ENCODE measurements at regions of chr15 and their contacts with region 1.

Region 1: GRCh38 chr15:37880009-37880834 is 54.2 kb upstream of the TMCO5A start:
- DNase-seq: no peak
- H3K4me3 ChIP-seq: no peak overlapping the region
- H3K27me3 ChIP-seq: no peaks in the 10 kb centered on the region
- CTCF ChIP-seq: peak; percentile 80

Region 2: GRCh38 chr15:37134699-37135131 is 745.5 kb before region 1 on chr15:
- CTCF ChIA-PET with region 1: interaction called, 15 read pairs
- POLR2A ChIA-PET with region 1: no interaction called
- DNase-seq: no peak
- H3K4me3 ChIP-seq: no peak overlapping the region
- H3K27me3 ChIP-seq: no peaks in the 10 kb centered on the region
- CTCF ChIP-seq: peak; percentile 72

Region 3: DNA sequence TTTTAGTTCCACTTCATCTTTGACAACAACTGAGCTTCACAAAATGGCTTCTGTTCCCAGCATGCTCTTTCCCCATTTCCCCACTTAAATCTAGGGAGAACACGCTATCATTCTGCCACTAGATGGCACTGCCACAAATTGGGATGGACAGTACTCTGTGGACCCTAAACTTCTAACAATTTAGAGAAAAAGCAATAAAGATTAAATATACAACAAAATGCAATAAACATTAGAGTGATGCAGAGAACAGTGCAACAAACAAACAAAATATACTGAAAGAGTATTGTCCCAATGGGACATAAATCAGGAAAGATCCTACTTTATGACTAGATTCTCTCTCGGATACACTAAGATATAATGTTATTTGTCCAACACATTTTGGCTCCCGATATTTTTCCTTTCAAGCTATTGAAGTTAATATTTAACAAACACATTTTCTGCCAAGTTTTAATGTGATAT is 115.5 kb before region 1 on chr15:
- CTCF ChIA-PET with region 1: interaction called, 32 read pairs
- POLR2A ChIA-PET with region 1: no interaction called
- DNase-seq: no peak
- H3K4me3 ChIP-seq: no peak overlapping the region
- H3K27me3 ChIP-seq: no peaks in the 10 kb centered on the region
- CTCF ChIP-seq: peak; percentile 60

Region 4: GRCh38 chr15:37793851-37794250 is 86.4 kb before region 1 on chr15:
- CTCF ChIA-PET with region 1: no interaction called
- POLR2A ChIA-PET with region 1: no interaction called
- DNase-seq: no peak
- H3K4me3 ChIP-seq: no peak overlapping the region
- H3K27me3 ChIP-seq: no peaks in the 10 kb centered on the region
- CTCF ChIP-seq: no peak

Region 5: GRCh38 chr15:37860896-37861295 is 19.3 kb before region 1 on chr15:
- CTCF ChIA-PET with region 1: no interaction called
- POLR2A ChIA-PET with region 1: no interaction called
- DNase-seq: no peak
- H3K4me3 ChIP-seq: no peak overlapping the region
- H3K27me3 ChIP-seq: no peaks in the 10 kb centered on the region; the same call in 1 of the 2 replicates
- CTCF ChIP-seq: no peak

Region 6: DNA sequence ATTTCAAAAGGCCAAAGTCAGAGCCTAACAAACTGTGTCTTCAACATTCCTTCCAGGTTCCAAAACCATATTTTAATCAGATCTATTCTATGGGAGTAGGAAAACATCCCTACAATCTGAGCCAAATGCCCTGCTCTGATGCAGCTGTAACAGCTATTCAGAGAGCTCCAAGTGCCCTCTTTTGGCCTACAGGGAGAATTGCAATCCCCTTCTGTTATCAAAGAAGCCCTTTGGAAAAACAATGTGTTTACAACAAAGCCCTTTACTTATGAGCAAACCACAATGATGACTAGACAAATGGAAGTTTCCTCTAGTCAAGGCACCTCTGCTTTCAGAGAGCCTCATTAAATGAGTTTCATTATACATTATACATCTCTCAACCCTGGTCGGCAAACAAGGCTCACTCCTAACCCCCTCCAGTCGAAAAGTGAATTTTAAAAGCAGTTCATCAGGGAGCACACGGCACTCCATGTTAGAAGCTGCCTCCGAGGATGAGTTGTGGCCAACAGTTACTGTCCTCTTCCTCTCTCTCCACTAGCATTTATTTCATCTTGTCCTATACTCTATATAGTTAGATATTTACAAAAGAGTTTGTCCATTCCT is 11.6 kb after region 1 on chr15:
- CTCF ChIA-PET with region 1: interaction called, 61 read pairs
- POLR2A ChIA-PET with region 1: no interaction called
- DNase-seq: no peak
- H3K4me3 ChIP-seq: no peak overlapping the region
- H3K27me3 ChIP-seq: no peaks in the 10 kb centered on the region
- CTCF ChIP-seq: peak; percentile 88